WTC11 (cell line): ENCODE measurements at regions of chr10 and their contacts with region 1.

Region 1: DNA sequence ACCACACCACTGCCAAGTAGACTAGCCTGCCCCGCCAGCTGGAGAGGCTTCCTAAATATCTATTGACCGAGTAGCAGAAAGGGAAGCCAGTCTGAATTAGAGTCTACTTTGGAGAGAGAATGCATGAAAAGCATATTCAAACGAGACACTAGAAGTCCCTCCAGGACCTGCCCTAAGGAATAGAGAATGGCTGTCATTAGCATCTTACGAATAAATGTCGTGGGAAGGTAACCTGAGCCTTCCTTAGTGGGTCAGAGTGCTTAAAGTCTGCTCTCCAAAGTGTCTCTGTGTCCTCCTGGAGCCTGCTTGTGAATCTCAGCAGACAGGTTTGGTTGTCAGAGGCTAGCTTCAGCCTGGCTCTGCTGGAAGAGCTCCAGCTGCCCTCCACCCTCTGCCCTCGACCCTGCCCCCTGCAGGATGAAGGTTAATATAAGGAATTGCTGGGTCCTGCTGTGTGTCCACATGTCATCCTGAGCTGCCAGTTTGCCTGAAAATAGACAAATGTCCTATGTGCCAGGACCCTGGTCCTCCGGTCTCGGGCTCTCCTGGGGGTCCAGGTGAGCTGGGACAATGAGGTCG is 33.4 kb downstream of the FAM241B start:
- DNase-seq: peak; percentile 63
- ATAC-seq: peak; percentile 88
- H3K4me3 Mint-ChIP-seq: no peak overlapping the region
- H3K27ac Mint-ChIP-seq: no peak overlapping the region
- H3K4me1 Mint-ChIP-seq: peaks cover 27% of the 10 kb centered on the region
- H3K27me3 Mint-ChIP-seq: peaks cover 9% of the 10 kb centered on the region
- CTCF ChIP-seq: no peak

Region 2: DNA sequence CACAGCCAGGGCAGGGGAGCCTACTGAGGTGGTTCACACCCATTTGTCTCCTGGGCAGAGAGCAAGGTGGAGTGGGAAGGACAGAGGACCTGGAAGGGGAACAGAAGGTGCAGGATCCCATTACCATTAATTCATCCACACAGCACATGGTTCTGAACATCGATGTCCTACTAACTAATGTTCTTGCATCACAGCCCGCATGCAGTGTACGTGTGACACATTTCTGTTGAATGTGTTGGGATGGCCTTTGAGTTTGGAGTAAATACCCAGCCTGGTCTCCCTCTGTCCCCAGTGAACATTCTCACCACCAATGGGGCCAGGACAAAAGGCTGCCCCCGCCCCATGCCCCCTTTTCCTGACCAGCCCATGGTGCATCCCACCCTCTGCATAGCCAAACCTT is 12.8 kb after region 1 on chr10:
- CTCF ChIA-PET with region 1: interaction called, 17 read pairs
- POLR2A ChIA-PET with region 1: interaction called, 3 read pairs
- DNase-seq: no peak
- ATAC-seq: no peak
- H3K4me3 Mint-ChIP-seq: no peak overlapping the region
- H3K27ac Mint-ChIP-seq: no peak overlapping the region
- H3K4me1 Mint-ChIP-seq: no peaks in the 10 kb centered on the region
- H3K27me3 Mint-ChIP-seq: peaks cover 6% of the 10 kb centered on the region; the same call in 1 of the 2 replicates
- CTCF ChIP-seq: no peak

Region 3: GRCh38 chr10:69696073-69696731 is 32.7 kb after region 1 on chr10:
- CTCF ChIA-PET with region 1: interaction called, 18 read pairs
- POLR2A ChIA-PET with region 1: no interaction called
- DNase-seq: peak; percentile 58
- ATAC-seq: peak; percentile 91
- H3K4me3 Mint-ChIP-seq: no peak overlapping the region
- H3K27ac Mint-ChIP-seq: no peak overlapping the region
- H3K4me1 Mint-ChIP-seq: no peaks in the 10 kb centered on the region
- H3K27me3 Mint-ChIP-seq: peaks cover 10% of the 10 kb centered on the region
- CTCF ChIP-seq: peak; percentile 33; the same call in 1 of the 2 replicates

Region 4: DNA sequence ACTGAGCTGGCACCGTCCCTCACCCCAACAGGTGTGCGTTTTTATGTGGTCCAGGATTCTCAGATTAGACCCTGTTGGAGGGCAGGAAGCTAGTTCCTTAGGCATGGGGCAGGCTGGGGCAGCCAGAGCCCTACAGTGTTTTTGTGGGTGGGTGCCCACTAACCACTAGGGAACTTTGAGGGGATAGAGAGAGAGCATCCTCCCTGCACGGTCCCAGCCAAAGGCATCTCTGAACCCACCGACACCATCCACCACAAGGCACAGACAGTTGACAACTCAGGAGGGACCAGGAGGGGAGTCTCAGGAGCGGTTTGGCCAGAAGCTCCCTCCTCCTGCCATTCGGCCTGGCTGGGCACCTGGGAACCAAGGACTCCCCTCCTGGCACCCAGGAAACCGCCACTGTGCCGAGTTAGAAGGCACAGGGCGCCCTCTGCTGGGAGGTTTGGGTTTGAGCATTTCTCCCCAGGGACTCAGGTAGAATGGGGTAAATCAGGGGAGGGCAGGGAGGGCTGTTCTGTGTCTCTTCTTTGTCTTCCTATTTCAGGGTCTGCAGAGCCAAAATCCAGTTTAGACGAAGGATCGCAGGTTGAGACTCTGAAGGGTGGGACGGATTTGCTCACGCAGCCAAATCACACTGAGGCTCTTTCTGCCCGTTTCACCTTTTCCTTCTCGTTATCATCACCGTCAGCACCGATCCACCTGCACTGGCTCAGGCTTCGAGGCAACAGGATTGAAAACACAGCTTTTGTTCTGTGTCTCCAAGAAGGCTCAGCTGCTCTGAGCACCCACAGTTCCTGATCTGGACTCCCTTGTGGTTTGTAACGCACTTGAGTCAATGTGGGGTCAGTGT is 53.5 kb after region 1 on chr10:
- CTCF ChIA-PET with region 1: interaction called, 67 read pairs
- POLR2A ChIA-PET with region 1: no interaction called
- DNase-seq: peak; percentile 84
- ATAC-seq: peak; percentile 88
- H3K4me3 Mint-ChIP-seq: no peak overlapping the region
- H3K27ac Mint-ChIP-seq: 0 out of 2 replicates have a peak overlapping the region, but pooled peaks have one; percentile 8
- H3K4me1 Mint-ChIP-seq: peaks cover 7% of the 10 kb centered on the region
- H3K27me3 Mint-ChIP-seq: peaks cover 8% of the 10 kb centered on the region
- CTCF ChIP-seq: peak; percentile 80

Region 5: GRCh38 chr10:69742928-69743602 is 79.6 kb after region 1 on chr10:
- CTCF ChIA-PET with region 1: interaction called, 21 read pairs
- POLR2A ChIA-PET with region 1: no interaction called
- DNase-seq: peak; percentile 79
- ATAC-seq: peak; percentile 92
- H3K4me3 Mint-ChIP-seq: no peak overlapping the region
- H3K27ac Mint-ChIP-seq: no peak overlapping the region
- H3K4me1 Mint-ChIP-seq: 0 out of 2 replicates have a peak, but pooled peaks cover 6% of the 10 kb centered on the region
- H3K27me3 Mint-ChIP-seq: peaks cover 4% of the 10 kb centered on the region
- CTCF ChIP-seq: 0 out of 2 replicates have a peak, but pooled peaks have one; percentile 28